Testis (tissue), 5 donors: ENCODE measurements at regions of chr3 and their contacts with region 1.

Region 1: DNA sequence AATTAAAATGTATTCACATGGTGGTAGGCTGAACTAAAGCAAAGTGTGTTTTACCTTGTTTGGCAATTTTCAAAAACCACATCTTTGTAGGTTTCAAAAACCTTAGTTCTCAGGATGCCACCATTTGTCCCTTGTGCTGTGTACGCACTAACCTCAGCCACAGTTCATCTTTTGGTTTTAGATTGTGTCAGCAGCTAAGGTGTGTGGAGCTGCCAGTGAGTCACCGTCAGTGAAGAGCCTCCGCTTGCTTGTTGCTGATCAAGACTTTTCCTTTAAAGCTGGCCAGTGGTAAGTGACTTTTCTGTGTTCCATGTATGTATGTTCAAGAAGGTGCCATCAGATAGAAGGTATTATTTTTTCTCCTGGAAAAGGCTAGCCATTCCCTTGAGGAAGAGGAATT is 21.1 kb downstream of the OXNAD1 start:
- DNase-seq: no peak
- H3K4me3 ChIP-seq: no peak overlapping the region
- H3K27ac ChIP-seq: no peak overlapping the region
- H3K4me1 ChIP-seq: no peaks in the 10 kb centered on the region
- H3K27me3 ChIP-seq: no peaks in the 10 kb centered on the region
- CTCF ChIP-seq: no peak
- POLR2A ChIP-seq: no peak

Region 2: GRCh38 chr3:15982667-15983145 is 303.5 kb before region 1 on chr3:
- intact Hi-C with region 1: no loop called
- DNase-seq: no peak
- H3K4me3 ChIP-seq: no peak overlapping the region
- H3K27ac ChIP-seq: no peak overlapping the region
- H3K4me1 ChIP-seq: no peaks in the 10 kb centered on the region
- H3K27me3 ChIP-seq: no peaks in the 10 kb centered on the region
- CTCF ChIP-seq: no peak
- POLR2A ChIP-seq: no peak

Region 3: GRCh38 chr3:16548721-16549120 is 262.6 kb after region 1 on chr3:
- intact Hi-C with region 1: loop called (anchors 10 kb)
- DNase-seq: no peak
- H3K4me3 ChIP-seq: no peak overlapping the region
- H3K27ac ChIP-seq: no peak overlapping the region
- H3K4me1 ChIP-seq: no peaks in the 10 kb centered on the region
- H3K27me3 ChIP-seq: no peaks in the 10 kb centered on the region
- CTCF ChIP-seq: no peak
- POLR2A ChIP-seq: no peak